ENCODE measurements at regions of chr12 and their contacts with region 1.

Region 1: DNA sequence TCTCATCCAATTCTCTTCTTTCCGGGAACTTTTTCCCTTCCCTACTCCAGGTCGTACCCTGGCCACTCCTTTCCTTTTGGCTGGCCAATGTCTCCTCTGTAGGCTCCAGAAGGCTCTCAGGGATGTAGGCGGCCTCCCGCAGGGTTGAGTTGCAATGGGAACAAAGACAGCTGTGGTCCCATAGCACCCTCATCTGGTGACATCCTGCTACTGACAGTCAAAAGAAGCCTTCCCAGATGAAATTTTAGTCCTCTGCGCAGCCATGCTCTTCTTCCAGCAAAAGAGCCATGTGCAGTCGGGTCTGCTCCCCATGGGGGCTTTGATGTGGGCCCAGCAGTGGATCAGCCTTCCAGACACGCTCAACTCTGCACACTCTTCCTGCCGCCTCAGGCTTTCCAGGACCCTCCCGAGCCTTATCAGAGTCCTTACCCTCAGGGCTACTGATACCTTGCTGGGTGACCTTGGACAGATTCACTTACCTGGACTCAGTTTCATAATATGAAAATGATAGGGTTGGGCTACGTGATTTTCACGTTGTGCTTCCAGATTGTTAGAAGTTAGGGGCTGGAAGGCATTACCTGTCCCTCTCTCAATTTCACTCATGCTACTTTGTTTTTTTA is 5.5 kb upstream of the CELA1 start:
- DNase-seq: no peak
- CTCF ChIP-seq: peak; percentile 42

Region 2: DNA sequence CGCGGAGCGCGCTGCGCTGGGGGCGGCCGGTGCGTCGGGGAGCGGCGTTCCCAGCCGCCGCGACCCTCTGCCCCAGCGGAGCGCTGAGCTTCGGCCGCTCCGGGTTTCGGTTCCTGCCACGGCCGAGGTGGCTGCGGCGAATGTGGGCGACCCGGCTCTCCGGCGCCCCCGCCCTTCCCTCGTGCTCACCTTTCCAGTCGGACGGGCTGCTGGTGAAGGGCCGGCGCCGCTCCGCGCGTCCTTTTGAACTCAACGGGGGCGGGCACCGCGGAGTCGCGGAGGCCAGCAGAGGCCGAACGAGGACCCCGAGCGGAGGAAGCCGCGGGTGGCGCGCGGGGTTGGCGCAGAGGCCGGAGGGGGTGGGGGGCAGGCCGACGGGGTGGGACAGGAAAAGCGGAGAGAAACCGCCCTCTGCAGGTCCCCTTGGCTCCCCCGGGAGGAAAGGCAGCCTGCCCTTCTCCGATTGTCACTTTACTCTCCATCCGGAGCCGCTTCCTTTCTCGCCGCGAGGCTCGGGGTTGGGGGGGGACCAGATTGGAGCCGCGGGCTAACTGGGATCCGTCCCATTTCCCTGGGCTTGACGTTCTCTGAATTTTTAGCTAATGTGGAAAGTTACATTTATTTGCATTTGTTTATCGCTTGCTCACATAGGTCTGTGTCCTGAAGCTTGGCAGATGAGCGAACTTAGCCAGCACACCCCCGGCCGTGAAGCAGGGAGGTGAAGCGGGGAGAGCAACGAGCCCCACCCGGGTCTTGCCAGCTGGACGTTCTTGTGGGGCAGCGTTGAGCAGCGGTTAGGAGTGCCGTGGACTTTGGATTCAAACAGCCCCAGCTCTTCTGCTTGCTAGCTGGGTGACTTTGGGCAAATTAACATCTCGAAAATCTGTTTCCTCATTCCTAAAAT is 81.7 kb before region 1 on chr12 and contains the start of gene SMAGP:
- CTCF ChIA-PET with region 1: interaction called, 16 read pairs
- POLR2A ChIA-PET with region 1: no interaction called
- DNase-seq: peak; percentile 84
- CTCF ChIP-seq: peak; percentile 8

Region 3: DNA sequence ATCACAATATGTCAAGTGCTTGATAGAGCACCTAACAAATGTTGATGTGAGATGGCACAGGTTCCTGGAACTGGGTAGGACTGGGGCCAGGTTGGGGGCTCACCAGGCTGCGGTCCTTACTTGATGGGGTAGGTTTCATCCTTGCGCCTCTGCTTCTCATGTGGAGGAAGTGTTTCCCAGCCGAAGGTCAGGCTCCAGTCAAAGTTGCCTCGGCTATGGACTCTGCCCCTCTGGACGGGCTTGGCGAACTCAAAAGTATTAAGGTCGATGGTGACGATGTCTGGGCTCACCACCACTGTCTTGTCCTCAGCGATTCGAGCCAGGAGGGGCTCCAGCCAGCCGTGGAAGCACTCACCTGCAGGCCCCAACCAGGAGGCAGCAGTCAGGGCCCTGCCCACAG is 12.0 kb after region 1 on chr12:
- CTCF ChIA-PET with region 1: interaction called, 35 read pairs
- POLR2A ChIA-PET with region 1: interaction called, 4 read pairs
- DNase-seq: no peak
- CTCF ChIP-seq: no peak

Measured in GM10248 (cell line).